ENCODE measurements at regions of chr16 and their contacts with region 1.

Region 1: DNA sequence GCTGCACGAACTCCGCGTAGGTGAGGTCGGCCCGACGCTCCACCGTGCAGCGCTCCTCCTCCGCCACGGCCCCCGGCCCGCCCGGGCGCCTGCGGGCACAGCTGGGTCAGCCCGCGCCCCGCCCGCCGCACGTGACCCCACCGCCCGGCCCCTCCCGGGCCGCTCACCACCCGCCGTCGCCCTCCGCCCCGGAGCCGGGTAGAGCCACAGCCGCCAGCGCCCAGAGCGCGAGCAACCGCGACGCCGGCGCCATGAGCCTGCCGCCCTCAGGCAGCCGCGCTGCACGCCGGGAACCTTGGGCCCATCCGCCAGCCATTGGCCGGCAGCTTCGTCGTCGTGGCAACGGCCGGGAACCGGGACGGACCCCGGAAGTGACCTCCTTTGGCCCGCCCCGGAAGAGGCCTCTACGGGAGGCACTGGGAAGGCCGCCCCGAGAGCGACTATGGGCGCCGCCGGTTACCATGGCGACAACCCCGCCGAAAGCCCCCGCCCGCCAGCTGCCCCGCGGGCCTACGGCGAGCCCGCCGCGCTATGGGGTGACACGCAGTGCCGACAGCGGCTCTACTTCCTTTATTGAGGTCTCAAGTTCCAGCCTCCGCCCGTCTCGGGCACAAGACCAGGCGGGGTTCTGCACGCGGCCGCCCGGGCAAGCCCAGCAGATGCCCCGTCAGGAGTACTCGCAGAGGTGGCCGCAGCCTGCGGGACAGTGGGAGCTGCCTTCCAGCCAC is at the start of gene JMJD8:
- DNase-seq: peak; percentile 94 to 97 (median 97)
- H3K4me3 ChIP-seq: peak within 1 kb of the TSS; percentile 41 to 78 (median 52)
- H3K4me3 Mint-ChIP-seq: peak within 1 kb of the TSS; percentile 73 to 79
- H3K27ac ChIP-seq: peak within 1 kb of the TSS; percentile 48 to 69
- H3K27ac Mint-ChIP-seq: peak within 1 kb of the TSS; percentile 54 to 90 (median 88)
- H3K4me1 ChIP-seq: peaks cover 41 to 66% of the 10 kb centered on the region in 2 donors
- H3K4me1 Mint-ChIP-seq: peaks cover 30% of the 10 kb centered on the region
- H3K27me3 ChIP-seq: no peaks in the 10 kb centered on the region
- H3K27me3 Mint-ChIP-seq: peaks cover 0 to 2% (median 0%) of the 10 kb centered on the region in 3 donors
- CTCF ChIP-seq: no peak
- polyA plus RNA-seq, gene JMJD8: 28.7 to 45.3 (median 33.5) TPM

Region 2: DNA sequence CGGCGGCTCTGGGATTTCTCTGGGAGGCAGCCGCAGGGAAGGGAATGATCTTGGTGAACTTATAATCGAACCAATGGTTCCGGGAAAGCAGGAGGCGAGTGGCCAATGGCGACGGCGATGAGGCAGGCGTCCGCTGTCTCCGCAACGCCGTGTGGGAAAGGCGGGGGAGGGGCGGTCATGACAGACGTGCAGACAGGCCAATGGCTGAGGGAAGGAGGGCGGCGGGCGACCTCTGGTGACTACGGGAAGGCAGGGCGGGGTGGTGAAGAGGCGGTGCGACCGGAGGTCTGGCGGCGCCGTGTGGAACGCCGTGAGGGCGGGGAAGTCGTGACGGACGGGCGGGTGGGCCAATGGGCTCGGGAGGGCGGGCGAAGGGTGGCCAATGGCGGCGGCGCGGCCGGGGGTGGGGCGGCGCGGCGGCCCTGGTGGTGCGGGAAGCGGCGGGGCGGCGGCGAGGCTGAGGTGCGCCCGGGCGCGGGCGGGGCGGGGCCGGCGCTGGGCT is 94.5 kb before region 1 on chr16 and contains the start of gene RAB40C:
- intact Hi-C with region 1: loop called (anchors 5 kb)
- DNase-seq: peak; percentile 96 to 100 (median 99)
- H3K4me3 ChIP-seq: peak within 1 kb of the TSS; percentile 85 to 92 (median 86)
- H3K4me3 Mint-ChIP-seq: peak within 1 kb of the TSS; percentile 91 to 99
- H3K27ac ChIP-seq: peak within 1 kb of the TSS; percentile 86 to 91
- H3K27ac Mint-ChIP-seq: peak within 1 kb of the TSS; percentile 98 to 100 (median 99)
- H3K4me1 ChIP-seq: peaks cover 58 to 63% of the 10 kb centered on the region in 2 donors
- H3K4me1 Mint-ChIP-seq: peaks cover 54% of the 10 kb centered on the region
- H3K27me3 ChIP-seq: peaks cover 0 to 7% of the 10 kb centered on the region in 2 donors
- H3K27me3 Mint-ChIP-seq: peaks cover 3 to 15% (median 12%) of the 10 kb centered on the region in 3 donors
- CTCF ChIP-seq: no peak
- polyA plus RNA-seq, gene RAB40C: 10.0 to 22.6 (median 10.9) TPM

Region 3: GRCh38 chr16:660459-661183 is 23.6 kb before region 1 on chr16:
- intact Hi-C with region 1: loop called in 1 of 2 experiments (anchors 2 kb)
- DNase-seq: peak; percentile 91 to 94 (median 93)
- H3K4me3 ChIP-seq: peak overlapping the region; percentile 4 to 65 (median 27)
- H3K4me3 Mint-ChIP-seq: peak overlapping the region; percentile 65 to 73
- H3K27ac ChIP-seq: peak overlapping the region in 1 of 2 donors; percentile 40
- H3K27ac Mint-ChIP-seq: peak overlapping the region in 3 of 7 donors; percentile 8 to 30 (median 24)
- H3K4me1 ChIP-seq: peaks cover 11 to 16% of the 10 kb centered on the region in 2 donors
- H3K4me1 Mint-ChIP-seq: peaks cover 10% of the 10 kb centered on the region
- H3K27me3 ChIP-seq: no peaks in the 10 kb centered on the region
- H3K27me3 Mint-ChIP-seq: peaks cover 0 to 3% (median 2%) of the 10 kb centered on the region in 3 donors
- CTCF ChIP-seq: peak; percentile 72

Region 4: GRCh38 chr16:695355-696089 is 11.3 kb after region 1 on chr16:
- intact Hi-C with region 1: no loop called
- DNase-seq: peak in 1 of 3 donors; percentile 27
- H3K4me3 ChIP-seq: peak overlapping the region; percentile 9 to 71 (median 33)
- H3K4me3 Mint-ChIP-seq: peak overlapping the region; percentile 69 to 90
- H3K27ac ChIP-seq: no peak overlapping the region
- H3K27ac Mint-ChIP-seq: no peak overlapping the region
- H3K4me1 ChIP-seq: peaks cover 17 to 27% of the 10 kb centered on the region in 2 donors
- H3K4me1 Mint-ChIP-seq: peaks cover 13% of the 10 kb centered on the region
- H3K27me3 ChIP-seq: peaks cover 23 to 70% of the 10 kb centered on the region in 2 donors
- H3K27me3 Mint-ChIP-seq: peaks cover 64 to 94% (median 85%) of the 10 kb centered on the region in 3 donors
- CTCF ChIP-seq: no peak

Measured in CD14-positive monocyte (primary cell).